Activated CD8-positive, alpha-beta T cell treated with anti-CD3 and anti-CD28 coated beads for 36 hours (primary cell): ENCODE measurements at regions of chr14 and their contacts with region 1.

Region 1: GRCh38 chr14:105314287-105315200 is at the start of gene PACS2:
- DNase-seq: peak; percentile 67
- ATAC-seq: peak; percentile 84
- H3K4me3 Mint-ChIP-seq: peak within 1 kb of the TSS; percentile 87
- H3K27ac Mint-ChIP-seq: peak within 1 kb of the TSS; percentile 78
- H3K4me1 Mint-ChIP-seq: peaks cover 31% of the 10 kb centered on the region
- H3K27me3 Mint-ChIP-seq: no peaks in the 10 kb centered on the region
- CTCF ChIP-seq: no peak
- total RNA-seq, gene PACS2: 26.7 to 30.4 TPM

Region 2: GRCh38 chr14:105300792-105301533 is 13.6 kb before region 1 on chr14 and contains the start of gene BRF1:
- CTCF ChIA-PET with region 1: interaction called, 11 read pairs
- POLR2A ChIA-PET with region 1: interaction called, 10 read pairs
- intact Hi-C with region 1: no loop called
- DNase-seq: peak; percentile 100
- ATAC-seq: peak; percentile 91
- H3K4me3 Mint-ChIP-seq: peak within 1 kb of the TSS; percentile 85
- H3K27ac Mint-ChIP-seq: peak within 1 kb of the TSS; percentile 93
- H3K4me1 Mint-ChIP-seq: peaks cover 32% of the 10 kb centered on the region
- H3K27me3 Mint-ChIP-seq: no peaks in the 10 kb centered on the region
- CTCF ChIP-seq: no peak
- total RNA-seq, gene BRF1: 25.3 to 26.6 TPM